BJ (cell line): ENCODE measurements at regions of chr1 and their contacts with region 1.

Region 1: DNA sequence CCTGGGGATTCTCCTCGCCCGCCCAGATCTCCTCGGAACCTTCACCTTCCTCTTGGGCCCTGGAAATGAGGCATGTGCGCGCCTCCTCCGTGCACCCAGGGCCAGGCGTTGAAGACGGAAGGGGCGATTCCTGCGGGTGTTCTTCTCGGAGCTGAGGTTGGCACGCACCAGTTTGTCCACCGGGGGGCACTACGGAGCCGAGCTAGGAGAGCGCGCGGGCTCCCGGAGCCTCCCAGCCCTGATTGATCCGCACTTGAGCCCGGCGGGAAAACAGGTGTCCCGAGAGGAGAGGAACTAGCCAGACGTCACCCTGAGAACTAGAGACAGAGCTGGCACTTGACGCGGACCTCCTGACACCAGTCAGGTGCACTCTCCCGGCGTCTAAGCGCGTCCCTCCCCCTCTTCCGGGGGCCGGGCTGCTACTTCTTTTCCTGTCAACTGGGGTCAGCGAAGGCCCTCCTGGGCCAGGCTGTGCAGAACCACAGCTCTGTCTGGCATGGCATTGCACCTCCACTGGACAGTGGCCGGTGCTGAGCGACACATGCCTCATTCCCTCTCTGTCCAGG is 18.3 kb upstream of the SERINC2 start:
- DNase-seq: no peak
- H3K4me3 ChIP-seq: no peak overlapping the region
- H3K27me3 ChIP-seq: no peaks in the 10 kb centered on the region
- CTCF ChIP-seq: peak; percentile 95

Region 2: GRCh38 chr1:31372961-31373896 is 21.5 kb before region 1 on chr1 and contains the start of gene FABP3:
- CTCF ChIA-PET with region 1: interaction called, 36 read pairs
- POLR2A ChIA-PET with region 1: interaction called, 12 read pairs
- DNase-seq: no peak
- H3K4me3 ChIP-seq: peak within 1 kb of the TSS; percentile 39
- H3K27me3 ChIP-seq: no peaks in the 10 kb centered on the region
- CTCF ChIP-seq: no peak
- polyA plus RNA-seq, gene FABP3: 9.0 and 11.7 TPM in 2 replicates

Region 3: DNA sequence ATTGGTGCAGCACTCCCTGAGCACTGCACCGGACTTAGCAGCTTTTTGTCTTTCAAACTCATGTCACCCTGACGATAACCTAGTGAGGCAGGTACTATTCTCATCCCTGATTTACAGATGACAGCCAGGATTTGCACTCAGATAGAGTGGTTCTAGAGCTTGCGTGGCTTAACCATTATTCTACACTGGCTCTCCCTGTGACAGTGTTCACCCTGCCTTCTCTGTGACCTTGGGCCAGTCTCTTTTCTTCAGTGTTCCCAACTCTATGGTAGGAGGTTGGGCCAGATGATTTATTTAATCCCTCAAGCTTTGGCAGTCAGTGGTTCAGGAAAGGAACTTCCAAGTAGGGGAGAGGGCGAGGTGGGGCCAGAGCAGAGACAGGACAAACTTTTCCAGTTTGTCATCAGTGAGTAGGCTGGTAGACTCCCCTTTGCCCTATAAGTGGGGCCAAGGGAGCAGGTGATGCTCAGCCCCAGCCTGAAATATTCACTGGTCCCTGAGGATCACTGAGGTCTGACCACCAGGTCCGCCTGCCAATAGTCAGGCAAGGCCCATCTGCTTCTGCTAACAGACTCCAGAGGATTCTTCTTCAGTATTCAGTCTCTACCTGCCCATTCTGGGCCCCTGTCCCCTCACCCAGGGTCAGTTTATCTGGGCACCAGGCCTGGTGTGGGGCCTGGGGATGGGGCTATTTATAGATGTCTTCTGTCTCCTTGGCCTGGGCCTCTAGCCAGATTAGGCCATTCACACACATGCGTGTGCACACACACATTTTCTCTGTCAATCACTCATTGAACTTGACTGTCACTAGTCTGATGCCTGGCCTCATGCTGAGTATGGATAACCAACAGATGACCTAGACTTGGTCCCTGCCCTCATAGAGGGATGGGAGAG is 13.1 kb before region 1 on chr1:
- CTCF ChIA-PET with region 1: interaction called, 36 read pairs
- POLR2A ChIA-PET with region 1: no interaction called
- DNase-seq: no peak
- H3K4me3 ChIP-seq: no peak overlapping the region
- H3K27me3 ChIP-seq: no peaks in the 10 kb centered on the region
- CTCF ChIP-seq: no peak